Sigmoid colon (tissue), 7 donors: ENCODE measurements at regions of chrX and their contacts with region 1.

Region 1: DNA sequence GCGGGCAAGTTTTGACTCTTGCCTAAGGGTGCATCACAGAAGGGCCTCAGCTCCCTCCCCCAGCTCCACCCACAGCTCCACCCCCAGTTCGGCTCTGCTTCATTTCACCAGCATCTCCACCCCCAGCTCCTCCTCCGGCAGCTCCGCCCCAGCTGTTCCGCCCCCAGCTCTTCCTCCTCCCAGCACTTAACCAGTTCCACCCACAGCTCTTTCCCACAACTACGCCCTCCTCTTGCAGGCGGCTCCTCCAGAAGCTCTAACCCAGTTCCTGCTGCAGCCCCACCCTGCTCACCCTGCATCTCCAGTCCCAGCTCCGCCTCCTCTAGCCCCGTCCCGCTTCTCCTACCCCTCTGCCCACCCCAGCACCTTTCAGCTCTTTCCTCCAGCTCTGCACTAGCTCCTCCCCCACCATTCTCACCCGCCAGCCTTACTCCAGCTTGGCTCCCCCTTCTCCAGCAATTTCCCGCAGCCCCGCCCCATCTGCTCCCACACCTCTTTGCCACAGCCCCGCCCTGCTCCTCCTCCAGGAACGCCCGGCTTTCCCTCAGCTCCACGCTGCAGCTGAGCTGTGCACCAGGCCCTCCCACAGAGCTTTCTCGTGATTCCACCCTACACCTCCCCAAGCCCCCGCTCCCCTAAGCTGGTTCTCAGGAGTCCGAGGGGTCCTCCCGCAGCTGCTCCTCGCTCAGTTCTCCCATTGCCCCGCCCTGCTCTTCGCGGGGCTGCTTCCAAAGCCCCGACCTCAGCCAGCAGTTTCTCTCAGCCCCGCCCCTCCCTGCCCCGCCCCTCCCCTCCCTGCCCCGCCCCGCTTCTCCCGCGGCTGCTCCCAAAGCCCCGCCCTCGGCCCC is 1.3 kb upstream of the EOLA1 start:
- DNase-seq: peak; percentile 96
- H3K4me3 ChIP-seq: peak overlapping the region; percentile 33 to 64 (median 59)
- H3K27ac ChIP-seq: peak overlapping the region; percentile 87 to 89 (median 88)
- H3K4me1 ChIP-seq: peaks cover 0 to 8% (median 7%) of the 10 kb centered on the region in 4 donors
- H3K27me3 ChIP-seq: no peaks in the 10 kb centered on the region
- CTCF ChIP-seq: no peak
- EP300 ChIP-seq: no peak
- POLR2A ChIP-seq: no peak

Region 2: GRCh38 chrX:147911192-147912022 is 1628.1 kb before region 1 on chrX and contains the start of gene FMR1:
- intact Hi-C with region 1: loop called (anchors 10 kb)
- DNase-seq: peak; percentile 97
- H3K4me3 ChIP-seq: peak within 1 kb of the TSS; percentile 62 to 73 (median 68)
- H3K27ac ChIP-seq: peak within 1 kb of the TSS; percentile 87 to 93 (median 90)
- H3K4me1 ChIP-seq: peaks cover 0 to 33% (median 6%) of the 10 kb centered on the region in 4 donors
- H3K27me3 ChIP-seq: no peaks in the 10 kb centered on the region
- CTCF ChIP-seq: no peak
- EP300 ChIP-seq: no peak
- POLR2A ChIP-seq: no peak
- total RNA-seq, gene FMR1: 29.4 to 35.2 (median 33.7) TPM

Region 3: GRCh38 chrX:149504915-149505651 is 34.4 kb before region 1 on chrX and contains the start of gene IDS:
- intact Hi-C with region 1: loop called (anchors 2 kb)
- DNase-seq: peak; percentile 96
- H3K4me3 ChIP-seq: peak within 1 kb of the TSS; percentile 65 to 69 (median 68)
- H3K27ac ChIP-seq: peak within 1 kb of the TSS; percentile 83 to 94 (median 88)
- H3K4me1 ChIP-seq: peaks cover 0 to 10% (median 2%) of the 10 kb centered on the region in 4 donors
- H3K27me3 ChIP-seq: no peaks in the 10 kb centered on the region
- CTCF ChIP-seq: no peak
- EP300 ChIP-seq: no peak
- POLR2A ChIP-seq: peak; percentile 91 to 95
- total RNA-seq, gene IDS: 71.3 to 97.2 (median 89.9) TPM

Region 4: GRCh38 chrX:149939796-149940673 is 400.5 kb after region 1 on chrX:
- intact Hi-C with region 1: loop called (anchors 10 kb)
- DNase-seq: peak; percentile 99
- H3K4me3 ChIP-seq: peak overlapping the region; percentile 49 to 78 (median 58)
- H3K27ac ChIP-seq: peak overlapping the region; percentile 88 to 93 (median 90)
- H3K4me1 ChIP-seq: peaks cover 0 to 7% (median 5%) of the 10 kb centered on the region in 4 donors
- H3K27me3 ChIP-seq: no peaks in the 10 kb centered on the region
- CTCF ChIP-seq: no peak
- EP300 ChIP-seq: no peak
- POLR2A ChIP-seq: no peak